ENCODE measurements at regions of chr5 and their contacts with region 1.

Region 1: DNA sequence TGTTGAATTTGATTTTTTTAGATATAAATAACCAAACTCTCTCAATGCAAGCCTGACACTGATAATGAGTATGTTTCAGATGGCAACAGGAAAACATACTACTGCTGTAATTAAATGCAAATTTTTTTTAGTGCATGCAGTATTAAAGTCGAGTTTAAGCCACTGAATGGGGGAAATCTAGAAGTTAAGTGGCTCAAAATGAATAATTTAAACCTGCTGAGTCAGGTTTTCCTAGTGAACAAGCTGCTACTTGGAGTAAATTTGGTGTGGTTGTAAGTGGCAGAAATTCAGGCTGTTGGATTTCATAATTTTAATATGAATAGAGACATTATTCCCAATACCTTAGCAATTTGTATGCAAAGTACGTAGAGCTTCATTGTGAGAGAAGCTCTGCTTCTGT is 121.8 kb downstream of the SLF1 start:
- DNase-seq: no peak
- ATAC-seq: no peak
- H3K4me3 ChIP-seq: no peak overlapping the region
- H3K27ac ChIP-seq: no peak overlapping the region
- H3K4me1 ChIP-seq: no peaks in the 10 kb centered on the region
- H3K27me3 ChIP-seq: no peaks in the 10 kb centered on the region
- CTCF ChIP-seq: no peak
- POLR2A ChIP-seq: no peak
- RAD21 ChIP-seq: no peak

Region 2: DNA sequence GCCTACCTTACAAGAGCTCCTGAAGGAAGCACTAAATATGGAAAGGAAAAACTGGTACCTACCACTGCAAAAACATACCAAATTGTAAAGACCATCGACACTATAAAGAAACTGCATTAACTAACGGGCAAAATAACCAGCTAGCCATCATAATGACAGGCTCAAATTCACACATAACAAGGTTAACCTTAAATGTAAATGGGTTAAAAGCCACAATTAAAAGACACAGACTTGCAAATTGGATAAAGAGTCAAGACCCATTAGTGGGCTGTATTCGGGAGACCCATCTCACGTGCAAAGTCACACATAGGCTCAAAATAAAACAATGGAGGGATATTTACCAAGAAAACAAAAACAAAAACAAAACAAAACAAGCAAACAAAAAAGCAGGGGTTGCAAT is 1048.3 kb before region 1 on chr5:
- CTCF ChIA-PET with region 1: no interaction called
- POLR2A ChIA-PET with region 1: no interaction called
- dilution Hi-C with region 1: no loop called
- in situ Hi-C with region 1: no loop called
- intact Hi-C with region 1: no loop called
- DNase-seq: no peak
- ATAC-seq: no peak
- H3K4me3 ChIP-seq: no peak overlapping the region
- H3K27ac ChIP-seq: no peak overlapping the region
- H3K4me1 ChIP-seq: no peaks in the 10 kb centered on the region; the same call in 1 of the 2 replicates
- H3K27me3 ChIP-seq: no peaks in the 10 kb centered on the region
- CTCF ChIP-seq: no peak
- POLR2A ChIP-seq: no peak
- RAD21 ChIP-seq: no peak

Region 3: GRCh38 chr5:93915142-93915553 is 825.1 kb before region 1 on chr5:
- CTCF ChIA-PET with region 1: interaction called, 5 read pairs
- POLR2A ChIA-PET with region 1: no interaction called
- dilution Hi-C with region 1: no loop called
- in situ Hi-C with region 1: no loop called
- intact Hi-C with region 1: loop called (anchors 5 kb)
- DNase-seq: peak; percentile 73
- ATAC-seq: peak; percentile 56; the same call in 1 of the 2 replicates
- H3K4me3 ChIP-seq: no peak overlapping the region
- H3K27ac ChIP-seq: no peak overlapping the region
- H3K4me1 ChIP-seq: no peaks in the 10 kb centered on the region
- H3K27me3 ChIP-seq: no peaks in the 10 kb centered on the region
- CTCF ChIP-seq: peak; percentile 69
- POLR2A ChIP-seq: no peak
- RAD21 ChIP-seq: peak; percentile 75

Region 4: GRCh38 chr5:94159144-94159543 is 581.1 kb before region 1 on chr5:
- CTCF ChIA-PET with region 1: interaction called, 3 read pairs
- POLR2A ChIA-PET with region 1: no interaction called
- dilution Hi-C with region 1: no loop called
- in situ Hi-C with region 1: no loop called
- intact Hi-C with region 1: loop called (anchors 5 kb)
- DNase-seq: no peak
- ATAC-seq: no peak
- H3K4me3 ChIP-seq: no peak overlapping the region
- H3K27ac ChIP-seq: no peak overlapping the region
- H3K4me1 ChIP-seq: peaks cover 2% of the 10 kb centered on the region
- H3K27me3 ChIP-seq: no peaks in the 10 kb centered on the region
- CTCF ChIP-seq: peak; percentile 29
- POLR2A ChIP-seq: no peak
- RAD21 ChIP-seq: peak; percentile 42; the same call in 1 of the 2 replicates

Region 5: DNA sequence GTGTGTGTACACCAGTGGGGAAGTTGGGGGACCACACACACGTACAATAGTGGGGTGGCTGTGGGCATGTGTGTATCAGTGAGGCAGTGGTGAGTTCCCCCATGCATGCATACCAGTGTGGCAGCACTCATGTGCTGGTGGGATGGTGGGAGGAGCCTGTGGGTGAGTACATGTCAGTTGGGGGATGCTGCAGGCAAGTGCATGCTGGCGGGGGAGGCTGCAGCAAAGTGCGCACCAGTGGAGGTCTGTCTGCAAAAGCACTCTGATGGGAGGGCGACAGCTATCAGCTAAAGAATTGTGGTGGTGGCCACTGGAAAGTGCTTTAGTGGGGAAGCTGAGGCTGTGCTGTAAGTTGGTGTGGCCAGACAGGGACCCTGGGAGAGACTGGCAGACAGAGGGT is 540.7 kb before region 1 on chr5:
- CTCF ChIA-PET with region 1: no interaction called
- POLR2A ChIA-PET with region 1: no interaction called
- dilution Hi-C with region 1: no loop called
- in situ Hi-C with region 1: no loop called
- intact Hi-C with region 1: no loop called
- DNase-seq: no peak
- ATAC-seq: no peak
- H3K4me3 ChIP-seq: no peak overlapping the region
- H3K27ac ChIP-seq: no peak overlapping the region
- H3K4me1 ChIP-seq: no peaks in the 10 kb centered on the region
- H3K27me3 ChIP-seq: no peaks in the 10 kb centered on the region
- CTCF ChIP-seq: no peak
- POLR2A ChIP-seq: no peak
- RAD21 ChIP-seq: no peak

Region 6: DNA sequence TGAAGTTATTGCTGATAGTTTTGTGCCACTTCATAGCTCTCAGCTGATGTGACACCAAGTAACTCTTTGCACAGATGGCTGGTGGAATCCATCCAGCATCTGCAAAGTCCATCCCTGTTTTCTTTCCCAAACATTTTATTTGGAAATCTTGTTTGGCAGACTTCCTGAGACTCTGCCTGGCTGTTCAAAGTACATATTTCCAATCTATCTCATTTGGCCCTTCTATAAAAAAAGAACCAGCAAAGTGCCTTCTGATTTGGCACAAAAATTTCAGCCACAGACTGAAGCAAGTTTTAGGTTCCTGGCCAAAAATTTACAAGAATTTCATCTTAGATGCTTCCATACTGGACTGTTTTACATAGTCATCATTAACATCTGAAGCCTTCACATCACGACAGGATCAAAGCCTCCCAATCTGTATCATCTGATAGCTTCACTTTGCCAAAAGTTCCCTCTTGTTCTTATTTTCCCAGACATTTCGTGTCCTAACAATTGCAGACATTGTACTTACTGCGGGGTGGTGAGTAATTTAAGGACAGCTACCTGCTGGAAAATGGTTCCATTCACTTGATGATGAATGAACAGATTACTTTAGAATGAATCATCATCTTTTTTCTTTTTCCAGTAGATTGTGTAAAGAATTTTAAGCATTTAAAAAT is 499.2 kb before region 1 on chr5:
- CTCF ChIA-PET with region 1: no interaction called
- POLR2A ChIA-PET with region 1: no interaction called
- dilution Hi-C with region 1: no loop called
- in situ Hi-C with region 1: no loop called
- intact Hi-C with region 1: loop called (anchors 5 kb)
- DNase-seq: peak; percentile 38
- ATAC-seq: peak; percentile 32
- H3K4me3 ChIP-seq: no peak overlapping the region
- H3K27ac ChIP-seq: no peak overlapping the region
- H3K4me1 ChIP-seq: peaks cover 12% of the 10 kb centered on the region
- H3K27me3 ChIP-seq: no peaks in the 10 kb centered on the region
- CTCF ChIP-seq: no peak
- POLR2A ChIP-seq: no peak
- RAD21 ChIP-seq: no peak

Region 7: GRCh38 chr5:94524841-94525697 is 215.2 kb before region 1 on chr5:
- CTCF ChIA-PET with region 1: interaction called, 8 read pairs
- POLR2A ChIA-PET with region 1: no interaction called
- dilution Hi-C with region 1: no loop called
- in situ Hi-C with region 1: no loop called
- intact Hi-C with region 1: loop called (anchors 1 kb)
- DNase-seq: peak; percentile 30
- ATAC-seq: peak; percentile 59; the same call in 1 of the 2 replicates
- H3K4me3 ChIP-seq: no peak overlapping the region
- H3K27ac ChIP-seq: no peak overlapping the region
- H3K4me1 ChIP-seq: no peaks in the 10 kb centered on the region; the same call in 1 of the 2 replicates
- H3K27me3 ChIP-seq: no peaks in the 10 kb centered on the region
- CTCF ChIP-seq: peak; percentile 45
- POLR2A ChIP-seq: no peak
- RAD21 ChIP-seq: peak; percentile 45

Region 8: DNA sequence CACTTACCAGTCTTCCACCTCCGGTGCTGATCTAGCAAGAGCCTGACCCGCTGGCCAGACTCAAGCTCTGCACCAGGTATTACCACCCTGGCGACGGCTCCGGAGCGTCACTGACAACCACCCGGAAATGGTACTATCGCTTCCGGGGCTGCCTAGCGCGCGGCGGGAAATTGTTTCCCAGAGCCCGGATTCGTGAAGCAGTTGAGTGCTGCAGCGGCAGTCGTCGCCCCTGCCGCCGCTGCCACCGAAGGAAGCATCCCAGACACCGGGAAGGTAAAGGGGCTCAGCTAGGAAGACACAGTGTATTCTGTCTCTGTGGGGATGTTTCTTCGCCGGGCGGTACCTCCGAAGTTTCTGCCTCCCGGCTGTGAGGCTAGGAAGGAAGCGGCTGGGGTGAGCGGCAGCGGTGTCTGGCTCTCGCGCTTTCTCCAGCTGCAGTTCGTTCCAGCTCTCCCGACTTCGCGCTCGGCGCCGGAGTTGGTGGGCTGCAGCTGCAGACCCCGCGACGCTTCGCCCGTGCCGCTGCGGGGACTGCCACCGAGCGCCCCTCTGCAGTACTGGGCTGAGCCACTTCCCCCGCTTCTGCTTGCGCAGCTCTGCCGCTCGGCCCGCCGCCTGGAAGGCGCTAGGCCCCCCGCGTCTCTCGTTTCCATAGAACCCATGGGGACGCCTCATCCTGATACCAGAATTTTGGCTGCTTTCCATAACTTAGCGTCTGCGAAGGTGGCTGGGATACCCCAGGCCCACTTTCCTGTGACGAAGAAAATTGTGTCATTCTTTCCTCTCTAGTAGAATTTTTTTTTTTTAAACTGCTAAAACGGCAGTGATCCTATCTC is 121.6 kb before region 1 on chr5 and contains the starts of genes KIAA0825 and SLF1:
- CTCF ChIA-PET with region 1: interaction called, 7 read pairs
- POLR2A ChIA-PET with region 1: no interaction called
- dilution Hi-C with region 1: no loop called
- in situ Hi-C with region 1: no loop called
- intact Hi-C with region 1: loop called (anchors 2 kb)
- DNase-seq: peak; percentile 84
- ATAC-seq: peak; percentile 90
- H3K4me3 ChIP-seq: peak within 1 kb of the TSS; percentile 95
- H3K27ac ChIP-seq: peak within 1 kb of the TSS; percentile 64
- H3K4me1 ChIP-seq: no peaks in the 10 kb centered on the region
- H3K27me3 ChIP-seq: no peaks in the 10 kb centered on the region
- CTCF ChIP-seq: no peak; the same call in 1 of the 2 replicates
- POLR2A ChIP-seq: no peak
- RAD21 ChIP-seq: no peak
- total RNA-seq, gene KIAA0825: 1.8 and 3.9 TPM in 2 replicates
- total RNA-seq, gene SLF1: 3.4 and 7.5 TPM in 2 replicates

Region 9: GRCh38 chr5:95162231-95162992 is 422.1 kb after region 1 on chr5:
- CTCF ChIA-PET with region 1: no interaction called
- POLR2A ChIA-PET with region 1: no interaction called
- dilution Hi-C with region 1: no loop called
- in situ Hi-C with region 1: no loop called
- intact Hi-C with region 1: no loop called
- DNase-seq: no peak
- ATAC-seq: no peak
- H3K4me3 ChIP-seq: no peak overlapping the region
- H3K27ac ChIP-seq: no peak overlapping the region
- H3K4me1 ChIP-seq: no peaks in the 10 kb centered on the region
- H3K27me3 ChIP-seq: no peaks in the 10 kb centered on the region
- CTCF ChIP-seq: no peak
- POLR2A ChIP-seq: no peak
- RAD21 ChIP-seq: no peak

Region 10: GRCh38 chr5:95178046-95178651 is 437.9 kb after region 1 on chr5:
- CTCF ChIA-PET with region 1: no interaction called
- POLR2A ChIA-PET with region 1: no interaction called
- dilution Hi-C with region 1: no loop called
- in situ Hi-C with region 1: no loop called
- intact Hi-C with region 1: no loop called
- DNase-seq: no peak
- ATAC-seq: no peak
- H3K4me3 ChIP-seq: no peak overlapping the region
- H3K27ac ChIP-seq: no peak overlapping the region
- H3K4me1 ChIP-seq: no peaks in the 10 kb centered on the region
- H3K27me3 ChIP-seq: no peaks in the 10 kb centered on the region
- CTCF ChIP-seq: no peak
- POLR2A ChIP-seq: no peak
- RAD21 ChIP-seq: no peak

Measured in IMR-90 (cell line).